Activated CD8-positive, alpha-beta T cell treated with anti-CD3 and anti-CD28 coated beads for 36 hours (primary cell): ENCODE measurements at regions of chr6 and their contacts with region 1.

Region 1: DNA sequence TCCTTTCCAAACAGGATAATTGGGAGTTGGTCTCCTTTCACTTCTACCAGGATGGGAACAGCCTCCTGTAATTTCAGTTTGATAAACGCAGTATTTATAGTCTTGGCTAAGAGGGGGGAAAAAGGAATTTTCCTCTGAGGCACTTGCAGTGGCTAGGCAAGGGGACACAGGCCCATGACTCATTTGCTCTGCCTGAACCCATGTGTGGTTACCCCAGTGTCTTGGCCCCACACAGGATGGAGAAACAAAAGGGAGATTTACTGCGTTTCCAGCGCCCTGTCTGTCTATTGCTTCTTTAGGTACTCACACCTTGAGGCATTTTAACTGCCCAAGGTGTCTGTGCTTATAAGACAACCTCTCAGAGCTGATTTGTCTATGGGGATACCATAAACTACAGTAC is 74.8 kb upstream of the NEDD9 start:
- DNase-seq: peak; percentile 37
- ATAC-seq: peak; percentile 87
- H3K4me3 Mint-ChIP-seq: no peak overlapping the region
- H3K27ac Mint-ChIP-seq: peak overlapping the region; percentile 53
- H3K4me1 Mint-ChIP-seq: peaks cover 38% of the 10 kb centered on the region
- H3K27me3 Mint-ChIP-seq: no peaks in the 10 kb centered on the region
- CTCF ChIP-seq: no peak

Region 2: GRCh38 chr6:10991115-10991514 is 316.1 kb before region 1 on chr6:
- CTCF ChIA-PET with region 1: no interaction called
- POLR2A ChIA-PET with region 1: no interaction called
- intact Hi-C with region 1: no loop called
- DNase-seq: no peak
- ATAC-seq: no peak
- H3K4me3 Mint-ChIP-seq: no peak overlapping the region
- H3K27ac Mint-ChIP-seq: no peak overlapping the region
- H3K4me1 Mint-ChIP-seq: no peaks in the 10 kb centered on the region
- H3K27me3 Mint-ChIP-seq: peaks cover 2% of the 10 kb centered on the region
- CTCF ChIP-seq: no peak

Region 3: DNA sequence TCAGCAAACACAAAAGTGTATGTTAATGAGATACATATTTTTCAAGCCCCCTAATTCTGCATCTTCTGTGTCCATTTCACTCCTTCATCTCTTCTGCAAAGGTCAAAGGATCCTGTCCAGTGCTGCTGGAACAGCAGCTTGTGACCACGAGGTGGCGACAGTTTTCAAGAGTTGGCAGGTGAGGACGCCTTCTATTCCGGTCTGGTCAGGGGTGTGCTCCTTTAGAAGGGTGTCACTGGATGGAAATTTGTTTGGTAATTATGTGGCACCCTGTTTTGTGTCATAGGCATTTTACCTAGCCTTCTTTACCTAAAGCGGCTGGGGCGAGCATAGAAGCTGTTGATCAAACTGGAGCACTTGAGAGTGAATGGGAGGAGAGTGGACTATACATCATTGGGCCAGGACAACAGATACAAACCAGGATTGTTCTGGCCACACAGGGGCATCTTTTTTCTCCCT is 162.8 kb before region 1 on chr6:
- CTCF ChIA-PET with region 1: no interaction called
- POLR2A ChIA-PET with region 1: no interaction called
- intact Hi-C with region 1: no loop called
- DNase-seq: peak; percentile 87
- ATAC-seq: peak; percentile 96
- H3K4me3 Mint-ChIP-seq: no peak overlapping the region
- H3K27ac Mint-ChIP-seq: no peak overlapping the region
- H3K4me1 Mint-ChIP-seq: peaks cover 11% of the 10 kb centered on the region
- H3K27me3 Mint-ChIP-seq: no peaks in the 10 kb centered on the region
- CTCF ChIP-seq: peak; percentile 85

Region 4: GRCh38 chr6:11251541-11252360 is 55.5 kb before region 1 on chr6:
- CTCF ChIA-PET with region 1: no interaction called
- POLR2A ChIA-PET with region 1: no interaction called
- intact Hi-C with region 1: no loop called
- DNase-seq: no peak
- ATAC-seq: no peak
- H3K4me3 Mint-ChIP-seq: no peak overlapping the region
- H3K27ac Mint-ChIP-seq: no peak overlapping the region
- H3K4me1 Mint-ChIP-seq: peaks cover 16% of the 10 kb centered on the region
- H3K27me3 Mint-ChIP-seq: no peaks in the 10 kb centered on the region
- CTCF ChIP-seq: no peak

Region 5: GRCh38 chr6:11317885-11318771 is 10.9 kb after region 1 on chr6:
- CTCF ChIA-PET with region 1: interaction called, 11 read pairs
- POLR2A ChIA-PET with region 1: no interaction called
- intact Hi-C with region 1: no loop called
- DNase-seq: peak; percentile 92
- ATAC-seq: peak; percentile 93
- H3K4me3 Mint-ChIP-seq: no peak overlapping the region
- H3K27ac Mint-ChIP-seq: peak overlapping the region; percentile 91
- H3K4me1 Mint-ChIP-seq: peaks cover 52% of the 10 kb centered on the region
- H3K27me3 Mint-ChIP-seq: no peaks in the 10 kb centered on the region
- CTCF ChIP-seq: no peak